PC-3 (cell line): ENCODE measurements at regions of chr3 and their contacts with region 1.

Region 1: GRCh38 chr3:78666470-78666800 is 1101.4 kb downstream of the ROBO1 start:
- DNase-seq: peak; percentile 89
- ATAC-seq: peak; percentile 99
- H3K4me3 ChIP-seq: peak overlapping the region; percentile 41
- H3K27ac ChIP-seq: peak overlapping the region; percentile 76
- H3K4me1 ChIP-seq: peaks cover 27% of the 10 kb centered on the region
- H3K27me3 ChIP-seq: no peaks in the 10 kb centered on the region
- CTCF ChIP-seq: no peak

Region 2: GRCh38 chr3:78754066-78754743 is 87.8 kb after region 1 on chr3:
- CTCF ChIA-PET with region 1: no interaction called
- POLR2A ChIA-PET with region 1: no interaction called
- intact Hi-C with region 1: loop called (anchors 1 kb)
- DNase-seq: peak; percentile 82
- ATAC-seq: peak; percentile 91
- H3K4me3 ChIP-seq: no peak overlapping the region
- H3K27ac ChIP-seq: peak overlapping the region; percentile 48
- H3K4me1 ChIP-seq: peaks cover 32% of the 10 kb centered on the region
- H3K27me3 ChIP-seq: no peaks in the 10 kb centered on the region
- CTCF ChIP-seq: no peak

Region 3: GRCh38 chr3:78857494-78858111 is 191.2 kb after region 1 on chr3:
- CTCF ChIA-PET with region 1: no interaction called
- POLR2A ChIA-PET with region 1: no interaction called
- intact Hi-C with region 1: loop called (anchors 5 kb)
- DNase-seq: peak; percentile 63
- ATAC-seq: peak; percentile 88
- H3K4me3 ChIP-seq: no peak overlapping the region
- H3K27ac ChIP-seq: no peak overlapping the region
- H3K4me1 ChIP-seq: no peaks in the 10 kb centered on the region
- H3K27me3 ChIP-seq: no peaks in the 10 kb centered on the region
- CTCF ChIP-seq: peak; percentile 80

Region 4: GRCh38 chr3:79019137-79019923 is 352.9 kb after region 1 on chr3:
- CTCF ChIA-PET with region 1: interaction called, 4 read pairs
- POLR2A ChIA-PET with region 1: interaction called, 3 read pairs
- intact Hi-C with region 1: loop called (anchors 1 kb)
- DNase-seq: peak; percentile 88
- ATAC-seq: peak; percentile 76
- H3K4me3 ChIP-seq: peak overlapping the region; percentile 86
- H3K27ac ChIP-seq: peak overlapping the region; percentile 89
- H3K4me1 ChIP-seq: peaks cover 19% of the 10 kb centered on the region
- H3K27me3 ChIP-seq: no peaks in the 10 kb centered on the region
- CTCF ChIP-seq: 0 out of 2 replicates have a peak, but pooled peaks have one; percentile 13